GM10248 (cell line): ENCODE measurements at regions of chr12 and their contacts with region 1.

Region 1: GRCh38 chr12:66196806-66197205 is 7.8 kb downstream of the IRAK3 start:
- DNase-seq: peak; percentile 54
- CTCF ChIP-seq: no peak

Region 2: DNA sequence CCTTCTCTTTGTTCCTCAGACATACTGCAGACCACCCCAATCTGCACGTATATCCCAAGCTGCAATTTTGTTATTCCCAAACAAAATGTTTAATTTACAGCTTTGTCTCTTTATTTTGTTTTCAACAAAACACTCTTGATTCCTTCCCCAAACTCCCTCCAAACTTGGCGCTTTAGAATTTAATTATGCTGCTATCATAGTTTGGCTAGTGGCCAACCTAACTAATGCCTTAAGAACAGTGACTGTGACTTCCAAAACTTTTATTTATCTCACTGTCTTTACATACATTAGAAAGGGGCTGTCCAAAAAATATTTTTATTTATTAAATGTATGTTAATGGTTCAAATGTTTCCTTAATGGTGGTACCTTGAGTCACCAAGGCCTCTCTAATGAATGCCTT is 34.1 kb before region 1 on chr12:
- CTCF ChIA-PET with region 1: no interaction called
- POLR2A ChIA-PET with region 1: no interaction called
- DNase-seq: no peak
- CTCF ChIP-seq: no peak

Region 3: GRCh38 chr12:66235626-66236281 is 38.9 kb after region 1 on chr12:
- CTCF ChIA-PET with region 1: interaction called, 13 read pairs
- POLR2A ChIA-PET with region 1: no interaction called
- DNase-seq: no peak
- CTCF ChIP-seq: no peak

Region 4: DNA sequence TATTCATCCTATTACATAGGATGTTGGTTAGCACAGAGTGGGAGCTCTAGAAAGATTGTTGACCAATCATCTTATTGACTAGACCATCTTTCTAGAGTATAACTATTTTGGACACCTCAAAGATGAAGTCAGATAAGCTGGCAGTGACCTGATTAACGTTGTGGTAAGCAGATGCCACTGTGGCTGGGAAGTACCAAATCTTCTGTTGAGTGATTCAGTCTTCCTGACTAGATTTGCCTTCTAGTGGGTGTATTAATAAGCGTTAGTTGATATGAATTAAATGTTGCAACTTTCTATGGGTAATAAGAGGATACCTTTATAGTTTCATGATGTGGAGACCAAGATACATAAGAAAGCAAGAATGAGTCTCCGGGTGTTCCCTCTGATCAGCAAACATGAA is 54.2 kb after region 1 on chr12:
- CTCF ChIA-PET with region 1: no interaction called
- POLR2A ChIA-PET with region 1: no interaction called
- DNase-seq: no peak
- CTCF ChIP-seq: no peak

Region 5: GRCh38 chr12:66755727-66756395 is 559.1 kb after region 1 on chr12:
- CTCF ChIA-PET with region 1: no interaction called
- POLR2A ChIA-PET with region 1: no interaction called
- DNase-seq: no peak
- CTCF ChIP-seq: no peak